Activated CD8-positive, alpha-beta T cell treated with anti-CD3 and anti-CD28 coated beads for 36 hours (primary cell): ENCODE measurements at regions of chr11 and their contacts with region 1.

Region 1: DNA sequence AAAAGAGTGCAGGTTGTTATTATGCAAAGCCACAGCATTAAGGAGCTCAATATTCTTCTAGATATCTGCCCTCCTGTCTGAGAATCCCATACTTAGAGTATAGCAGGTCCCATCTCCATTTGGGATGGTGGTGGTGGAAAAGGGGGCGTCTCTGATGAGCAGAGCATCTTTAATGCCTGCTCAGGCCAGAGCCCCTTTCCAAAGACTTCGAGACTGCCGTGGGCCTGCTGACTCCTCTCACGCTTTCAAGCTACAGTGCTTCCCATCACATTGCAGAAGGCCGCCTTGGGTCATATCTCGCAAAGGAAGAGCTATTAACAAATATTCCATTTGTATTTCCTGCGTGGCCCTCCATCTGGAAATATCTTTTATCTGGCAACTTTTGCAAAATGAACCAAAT is 10.9 kb downstream of the LMO2 start:
- DNase-seq: no peak
- ATAC-seq: no peak
- H3K4me3 Mint-ChIP-seq: no peak overlapping the region
- H3K27ac Mint-ChIP-seq: no peak overlapping the region
- H3K4me1 Mint-ChIP-seq: no peaks in the 10 kb centered on the region
- H3K27me3 Mint-ChIP-seq: peaks cover 77% of the 10 kb centered on the region
- CTCF ChIP-seq: no peak

Region 2: GRCh38 chr11:33829433-33830141 is 51.4 kb before region 1 on chr11:
- CTCF ChIA-PET with region 1: no interaction called
- POLR2A ChIA-PET with region 1: no interaction called
- intact Hi-C with region 1: no loop called
- DNase-seq: peak; percentile 84
- ATAC-seq: peak; percentile 84
- H3K4me3 Mint-ChIP-seq: peak overlapping the region; percentile 55
- H3K27ac Mint-ChIP-seq: no peak overlapping the region
- H3K4me1 Mint-ChIP-seq: peaks cover 6% of the 10 kb centered on the region
- H3K27me3 Mint-ChIP-seq: peaks cover 41% of the 10 kb centered on the region
- CTCF ChIP-seq: peak; percentile 71

Region 3: DNA sequence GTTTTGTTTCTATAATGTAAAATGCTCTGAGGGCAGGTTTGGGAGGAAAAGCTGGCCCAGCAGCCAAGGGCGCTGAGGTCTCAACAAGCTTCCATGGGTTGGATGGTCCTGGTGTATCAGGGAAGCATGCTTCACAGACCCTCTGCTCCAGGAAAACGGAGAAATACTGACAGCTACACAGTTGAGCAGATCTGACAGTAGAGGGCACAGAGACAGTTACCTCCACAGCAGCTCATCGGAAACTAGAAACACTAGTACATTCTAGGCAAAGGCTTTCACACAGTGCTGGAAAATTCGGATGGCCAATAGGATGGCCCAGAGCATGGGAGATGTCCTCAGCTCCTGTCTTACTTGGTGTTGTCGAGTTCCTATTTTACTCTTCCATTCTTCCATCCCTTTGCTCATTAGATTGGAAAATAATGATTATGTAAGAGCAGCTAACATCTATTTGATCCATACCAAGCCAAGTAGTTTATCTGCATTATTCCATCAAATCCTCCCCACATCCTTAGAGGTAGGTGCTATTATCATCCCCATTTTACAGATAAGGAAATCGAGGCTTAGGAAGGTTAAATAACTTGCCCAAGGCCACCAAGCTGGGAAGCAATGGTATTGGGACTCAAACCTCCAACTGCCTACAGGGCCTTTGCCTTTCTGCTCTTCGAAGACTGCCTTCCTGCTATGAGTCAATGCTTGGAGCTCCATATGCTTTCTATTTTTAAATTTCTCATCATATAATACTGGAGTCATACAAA is 17.4 kb before region 1 on chr11:
- CTCF ChIA-PET with region 1: interaction called, 4 read pairs
- POLR2A ChIA-PET with region 1: no interaction called
- intact Hi-C with region 1: loop called (anchors 1 kb)
- DNase-seq: no peak
- ATAC-seq: no peak
- H3K4me3 Mint-ChIP-seq: no peak overlapping the region
- H3K27ac Mint-ChIP-seq: no peak overlapping the region
- H3K4me1 Mint-ChIP-seq: peaks cover 4% of the 10 kb centered on the region
- H3K27me3 Mint-ChIP-seq: peaks cover 58% of the 10 kb centered on the region
- CTCF ChIP-seq: no peak

Region 4: DNA sequence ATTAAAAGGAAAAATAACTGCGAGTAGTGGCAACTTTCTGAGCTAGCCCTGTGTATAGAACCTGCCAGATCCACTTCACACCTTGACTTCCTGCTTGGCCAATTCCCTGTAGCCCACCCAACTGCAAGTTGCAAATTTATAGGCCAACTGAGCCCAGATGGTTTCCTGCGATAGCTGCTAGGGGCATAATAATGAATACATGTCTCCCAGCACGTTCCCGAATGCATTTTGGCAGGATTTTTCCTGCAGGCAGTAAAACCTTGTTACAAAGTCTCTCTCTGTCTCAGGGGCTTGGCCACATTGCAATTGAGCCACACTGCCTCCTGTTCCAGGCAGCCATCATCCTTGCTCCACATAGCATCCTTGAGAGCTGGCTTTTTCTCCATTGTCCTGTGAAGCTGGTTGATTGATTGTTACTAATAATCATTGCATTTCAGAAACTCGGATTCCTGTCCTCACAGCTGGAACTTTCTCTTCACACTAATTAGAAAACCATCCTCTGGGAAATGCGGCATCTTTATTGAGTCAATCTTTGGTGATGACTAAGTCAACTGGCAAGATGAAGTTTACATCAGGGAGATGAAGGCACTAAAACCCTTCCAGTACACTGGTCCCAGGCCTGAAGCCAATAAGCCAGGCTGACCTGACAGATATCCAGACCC is 29.4 kb after region 1 on chr11:
- CTCF ChIA-PET with region 1: no interaction called
- POLR2A ChIA-PET with region 1: no interaction called
- intact Hi-C with region 1: no loop called
- DNase-seq: no peak
- ATAC-seq: no peak
- H3K4me3 Mint-ChIP-seq: no peak overlapping the region
- H3K27ac Mint-ChIP-seq: no peak overlapping the region
- H3K4me1 Mint-ChIP-seq: peaks cover 2% of the 10 kb centered on the region
- H3K27me3 Mint-ChIP-seq: peaks cover 31% of the 10 kb centered on the region
- CTCF ChIP-seq: no peak